ENCODE measurements at regions of chr4 and their contacts with region 1.

Region 1: DNA sequence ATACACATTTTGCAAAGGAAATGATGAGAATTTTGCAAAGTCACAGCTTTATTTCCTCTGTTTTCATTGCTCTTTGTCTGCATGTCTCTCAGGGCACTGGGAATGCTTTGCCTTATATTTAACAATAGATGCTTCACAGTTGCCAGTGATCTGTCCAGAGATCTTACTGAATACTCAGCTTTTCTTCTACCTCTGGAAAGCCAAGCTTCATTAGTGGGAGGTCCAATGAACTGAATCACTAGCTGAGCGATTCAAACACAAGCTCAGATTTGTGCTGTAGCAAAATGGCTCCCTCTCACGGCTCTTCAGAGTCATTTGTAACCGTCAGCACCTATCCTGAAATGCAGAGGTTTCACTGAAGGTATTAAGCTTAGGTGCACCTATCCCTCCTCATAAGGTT is 138.9 kb downstream of the DCLK2 start:
- DNase-seq: no peak
- ATAC-seq: no peak
- H3K4me3 ChIP-seq: no peak overlapping the region
- H3K27ac ChIP-seq: no peak overlapping the region
- H3K4me1 ChIP-seq: no peaks in the 10 kb centered on the region
- H3K27me3 ChIP-seq: no peaks in the 10 kb centered on the region
- CTCF ChIP-seq: no peak

Region 2: GRCh38 chr4:149999485-150000074 is 217.6 kb before region 1 on chr4:
- intact Hi-C with region 1: loop called in 1 of 2 experiments (anchors 10 kb)
- DNase-seq: no peak
- ATAC-seq: peak in 1 of 4 donors; percentile 65
- H3K4me3 ChIP-seq: no peak overlapping the region
- H3K27ac ChIP-seq: no peak overlapping the region
- H3K4me1 ChIP-seq: no peaks in the 10 kb centered on the region
- H3K27me3 ChIP-seq: no peaks in the 10 kb centered on the region
- CTCF ChIP-seq: peak; percentile 54

Region 3: GRCh38 chr4:150145090-150145949 is 71.9 kb before region 1 on chr4:
- intact Hi-C with region 1: no loop called
- DNase-seq: no peak
- ATAC-seq: no peak
- H3K4me3 ChIP-seq: no peak overlapping the region
- H3K27ac ChIP-seq: no peak overlapping the region
- H3K4me1 ChIP-seq: no peaks in the 10 kb centered on the region
- H3K27me3 ChIP-seq: no peaks in the 10 kb centered on the region
- CTCF ChIP-seq: no peak